ENCODE measurements at regions of chr7 and their contacts with region 1.

Region 1: DNA sequence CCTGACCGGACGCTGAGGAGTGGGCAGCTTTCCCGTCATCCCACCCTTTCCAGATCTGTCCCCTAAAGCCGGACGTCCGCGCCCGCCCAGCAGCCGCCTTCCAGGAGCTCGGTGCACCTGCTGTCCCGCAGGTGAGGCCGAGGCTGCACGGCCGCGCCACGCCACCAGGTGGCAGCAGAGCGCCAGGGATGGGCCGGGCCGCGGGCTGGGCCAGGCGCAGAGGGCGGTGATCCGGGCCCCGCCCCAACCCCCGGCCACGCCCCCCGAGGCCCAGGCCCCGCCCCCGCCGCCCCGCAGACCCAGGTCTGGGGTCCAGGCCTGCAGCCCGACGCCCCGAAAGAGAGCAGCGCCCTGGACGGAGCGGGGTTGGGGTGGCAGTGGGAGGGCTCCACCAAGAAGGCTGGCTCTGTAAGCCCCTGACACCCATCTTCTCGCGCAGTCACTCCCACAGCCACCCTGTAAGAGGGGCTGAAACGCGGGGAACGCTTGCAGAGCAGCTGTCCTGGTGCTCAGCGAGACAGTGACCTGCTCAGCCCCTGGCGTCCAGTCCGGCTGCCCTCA is 32.2 kb downstream of the FOXL3 start:
- DNase-seq: peak; percentile 96
- CTCF ChIP-seq: peak; percentile 100

Region 2: GRCh38 chr7:184294-185264 is 137.6 kb before region 1 on chr7:
- in situ Hi-C with region 1: no loop called
- DNase-seq: no peak
- CTCF ChIP-seq: no peak

Region 3: GRCh38 chr7:774161-775109 is 452.2 kb after region 1 on chr7:
- in situ Hi-C with region 1: loop called (anchors 5 kb)
- DNase-seq: peak; percentile 86
- CTCF ChIP-seq: peak; percentile 79

Region 4: GRCh38 chr7:876167-876967 is 554.2 kb after region 1 on chr7 and contains the start of gene GET4:
- in situ Hi-C with region 1: loop called (anchors 10 kb)
- DNase-seq: peak; percentile 92
- CTCF ChIP-seq: peak; percentile 22